ENCODE measurements at regions of chr1 and their contacts with region 1.

Region 1: DNA sequence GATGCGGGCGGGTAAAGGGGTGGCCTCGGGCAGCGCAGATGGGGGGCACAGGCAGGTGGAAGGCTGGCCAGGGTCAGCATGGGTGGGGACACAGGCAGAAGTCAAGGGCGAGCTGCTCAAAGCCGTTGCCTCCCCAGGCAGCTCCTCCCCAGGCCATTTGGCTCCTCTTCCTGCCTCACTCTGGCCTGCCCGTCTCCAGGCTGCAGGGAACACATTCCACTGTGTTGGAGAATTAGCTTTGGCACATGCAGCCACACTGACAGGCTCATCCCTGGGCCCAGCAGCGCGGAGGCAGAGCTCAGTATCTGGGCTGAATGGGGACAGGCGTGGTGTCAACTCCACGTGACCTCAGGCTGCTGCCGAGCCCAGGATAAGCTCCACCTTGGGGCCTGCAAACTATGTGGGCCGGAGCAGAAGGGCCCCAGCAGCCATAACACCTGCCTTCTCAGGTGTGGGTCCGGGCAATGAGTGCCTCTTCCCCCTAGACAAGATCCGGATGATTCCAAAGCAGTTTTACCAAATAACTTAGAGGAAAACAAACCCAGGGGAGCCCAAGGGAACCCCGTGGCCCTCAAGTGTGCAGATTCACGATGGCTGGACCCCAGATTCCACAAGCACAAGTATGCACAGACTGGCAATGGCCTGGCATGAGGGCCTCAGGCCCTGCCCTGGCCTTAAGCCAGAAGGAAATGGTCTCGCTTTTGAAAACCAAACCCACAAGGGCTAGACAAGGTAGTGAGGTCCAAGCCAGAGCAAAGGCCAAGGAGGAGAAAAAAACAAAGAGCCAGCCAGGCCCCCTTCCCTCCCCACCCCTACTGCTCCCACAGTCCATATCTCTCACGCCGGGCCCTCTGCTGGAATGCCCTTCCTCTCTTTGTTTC is 40.2 kb downstream of the HSPG2 start:
- DNase-seq: peak; percentile 93
- ATAC-seq: peak; percentile 83

Region 2: GRCh38 chr1:21734526-21734925 is 162.4 kb before region 1 on chr1:
- intact Hi-C with region 1: no loop called
- DNase-seq: no peak
- ATAC-seq: no peak

Region 3: DNA sequence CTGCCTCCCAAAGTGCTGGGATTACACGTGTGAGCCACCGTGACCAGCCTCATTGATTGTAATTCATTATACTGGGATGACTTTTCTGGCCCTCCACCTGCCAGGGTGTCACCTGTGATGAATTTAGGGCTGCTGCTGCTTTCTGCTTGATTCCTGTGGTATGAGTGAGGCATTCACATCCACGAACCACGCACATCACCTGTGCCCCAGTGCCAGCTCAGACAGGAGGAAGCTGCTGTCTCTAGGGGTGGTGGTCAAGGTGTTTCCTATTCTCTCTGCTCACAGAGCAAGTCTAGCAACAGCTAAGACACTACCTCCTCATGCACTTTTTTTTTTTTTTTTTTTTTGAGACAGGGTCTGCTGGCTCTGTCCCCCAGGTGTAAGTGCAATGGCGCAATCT is 97.2 kb before region 1 on chr1:
- intact Hi-C with region 1: no loop called
- DNase-seq: no peak
- ATAC-seq: no peak

Region 4: GRCh38 chr1:21956720-21957552 is 60.0 kb after region 1 on chr1:
- intact Hi-C with region 1: loop called (anchors 10 kb)
- DNase-seq: peak; percentile 77
- ATAC-seq: peak; percentile 89

Measured in left ventricle myocardium superior (tissue), 1 donor.